ENCODE measurements at regions of chr2 and their contacts with region 1.

Region 1: GRCh38 chr2:9656270-9656766 is 25.5 kb upstream of the YWHAQ start:
- DNase-seq: peak; percentile 88
- H3K4me3 Mint-ChIP-seq: peak overlapping the region; percentile 63
- H3K27ac Mint-ChIP-seq: peak overlapping the region; percentile 96
- H3K4me1 Mint-ChIP-seq: peaks cover 57% of the 10 kb centered on the region
- H3K27me3 Mint-ChIP-seq: no peaks in the 10 kb centered on the region

Region 2: GRCh38 chr2:9191041-9191481 is 465.3 kb before region 1 on chr2:
- CTCF ChIA-PET with region 1: no interaction called
- POLR2A ChIA-PET with region 1: no interaction called
- DNase-seq: no peak
- H3K4me3 Mint-ChIP-seq: no peak overlapping the region
- H3K27ac Mint-ChIP-seq: no peak overlapping the region
- H3K4me1 Mint-ChIP-seq: no peaks in the 10 kb centered on the region
- H3K27me3 Mint-ChIP-seq: peaks cover 18% of the 10 kb centered on the region

Region 3: GRCh38 chr2:9578467-9579235 is 77.7 kb before region 1 on chr2:
- CTCF ChIA-PET with region 1: no interaction called
- POLR2A ChIA-PET with region 1: no interaction called
- DNase-seq: no peak
- H3K4me3 Mint-ChIP-seq: no peak overlapping the region
- H3K27ac Mint-ChIP-seq: no peak overlapping the region
- H3K4me1 Mint-ChIP-seq: peaks cover 8% of the 10 kb centered on the region
- H3K27me3 Mint-ChIP-seq: no peaks in the 10 kb centered on the region

Region 4: GRCh38 chr2:9618410-9618809 is 37.9 kb before region 1 on chr2:
- CTCF ChIA-PET with region 1: no interaction called
- POLR2A ChIA-PET with region 1: interaction called, 10 read pairs
- DNase-seq: peak; percentile 52
- H3K4me3 Mint-ChIP-seq: peak overlapping the region; percentile 50
- H3K27ac Mint-ChIP-seq: peak overlapping the region; percentile 81
- H3K4me1 Mint-ChIP-seq: peaks cover 89% of the 10 kb centered on the region
- H3K27me3 Mint-ChIP-seq: no peaks in the 10 kb centered on the region

Region 5: GRCh38 chr2:9638532-9638931 is 17.8 kb before region 1 on chr2:
- CTCF ChIA-PET with region 1: no interaction called
- POLR2A ChIA-PET with region 1: interaction called, 110 read pairs
- DNase-seq: no peak
- H3K4me3 Mint-ChIP-seq: no peak overlapping the region
- H3K27ac Mint-ChIP-seq: no peak overlapping the region
- H3K4me1 Mint-ChIP-seq: peaks cover 40% of the 10 kb centered on the region
- H3K27me3 Mint-ChIP-seq: peaks cover 3% of the 10 kb centered on the region

Region 6: GRCh38 chr2:9644603-9645002 is 11.7 kb before region 1 on chr2:
- CTCF ChIA-PET with region 1: interaction called, 4 read pairs
- POLR2A ChIA-PET with region 1: interaction called, 18 read pairs
- DNase-seq: no peak
- H3K4me3 Mint-ChIP-seq: no peak overlapping the region
- H3K27ac Mint-ChIP-seq: no peak overlapping the region
- H3K4me1 Mint-ChIP-seq: peaks cover 47% of the 10 kb centered on the region
- H3K27me3 Mint-ChIP-seq: peaks cover 8% of the 10 kb centered on the region

Region 7: DNA sequence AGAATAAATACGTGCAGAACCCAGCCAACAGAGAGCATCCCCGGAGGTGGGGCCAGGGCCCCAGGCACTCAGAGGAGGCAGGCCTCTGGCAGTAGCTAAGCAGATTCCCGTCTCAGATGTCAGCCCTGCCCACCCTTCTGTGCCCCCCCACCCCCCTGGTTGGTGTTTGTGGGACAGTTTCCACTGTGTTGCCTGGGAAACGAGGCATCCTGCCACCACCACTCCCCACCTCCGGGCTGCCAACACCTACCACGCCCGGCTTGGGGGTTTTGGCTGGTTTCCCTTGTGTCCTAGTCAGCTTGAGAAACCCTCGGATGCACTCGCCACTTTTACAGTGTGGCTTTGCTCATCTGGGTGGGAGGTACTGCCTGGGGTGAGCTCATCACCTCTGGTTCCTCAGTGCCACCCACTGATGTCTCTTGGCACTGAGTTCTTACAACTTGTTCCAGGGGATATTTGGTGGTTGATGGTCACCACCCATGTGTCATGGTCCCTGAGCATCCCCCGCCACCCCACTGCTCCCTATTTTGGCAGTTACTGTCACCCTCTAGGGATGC is 46.8 kb after region 1 on chr2:
- CTCF ChIA-PET with region 1: interaction called, 9 read pairs
- POLR2A ChIA-PET with region 1: interaction called, 32 read pairs
- DNase-seq: peak; percentile 96
- H3K4me3 Mint-ChIP-seq: peak overlapping the region; percentile 9
- H3K27ac Mint-ChIP-seq: peak overlapping the region; percentile 92
- H3K4me1 Mint-ChIP-seq: peaks cover 79% of the 10 kb centered on the region
- H3K27me3 Mint-ChIP-seq: no peaks in the 10 kb centered on the region

Region 8: DNA sequence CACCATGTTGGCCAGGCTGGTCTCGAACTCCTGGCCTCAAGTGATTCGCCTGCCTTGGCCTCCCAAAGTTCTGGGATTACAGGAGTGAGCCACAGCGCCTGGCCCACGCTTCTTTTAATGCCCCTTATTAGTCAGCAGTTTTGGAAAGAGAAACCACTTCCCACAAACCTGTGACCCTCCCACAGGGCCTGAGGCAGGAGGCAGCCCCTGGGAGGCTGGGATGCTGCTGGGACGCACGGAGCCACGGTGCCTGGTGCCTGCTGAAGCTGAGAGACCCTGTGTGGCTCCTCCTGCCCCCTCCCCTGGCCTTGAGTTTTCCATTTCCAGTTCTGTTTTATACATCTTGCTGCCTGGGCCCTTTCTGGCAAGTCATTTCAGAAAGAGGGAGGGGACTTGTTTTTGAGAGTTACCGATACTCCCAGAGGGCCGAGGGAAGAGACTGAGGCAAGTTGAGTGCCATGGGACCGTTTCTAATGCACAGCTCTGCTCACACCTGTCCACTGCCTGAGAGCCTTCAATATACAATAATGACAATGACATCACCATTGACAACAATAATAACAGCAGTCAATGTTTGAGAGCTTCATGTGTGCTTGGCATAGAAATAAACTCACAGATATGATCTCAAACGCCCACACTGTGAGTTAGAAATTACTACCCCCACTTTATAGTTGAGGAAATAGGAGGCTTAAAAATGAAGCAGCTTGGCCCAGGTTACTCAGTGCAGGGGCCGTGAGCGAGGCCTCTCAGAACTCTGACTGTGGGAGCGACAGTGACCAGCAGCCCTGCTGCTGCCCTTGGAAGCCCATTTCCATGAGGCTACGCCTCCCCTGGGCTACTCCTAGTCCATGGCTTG is 52.6 kb after region 1 on chr2:
- CTCF ChIA-PET with region 1: interaction called, 9 read pairs
- POLR2A ChIA-PET with region 1: interaction called, 32 read pairs
- DNase-seq: no peak
- H3K4me3 Mint-ChIP-seq: no peak overlapping the region
- H3K27ac Mint-ChIP-seq: peak overlapping the region; percentile 79
- H3K4me1 Mint-ChIP-seq: peaks cover 80% of the 10 kb centered on the region
- H3K27me3 Mint-ChIP-seq: no peaks in the 10 kb centered on the region